ENCODE measurements at regions of chr7 and their contacts with region 1.

Region 1: GRCh38 chr7:7190142-7190541 is 7.8 kb downstream of the C1GALT1 start:
- DNase-seq: no peak
- H3K4me3 Mint-ChIP-seq: no peak overlapping the region
- H3K27ac Mint-ChIP-seq: no peak overlapping the region
- H3K4me1 Mint-ChIP-seq: peaks cover 11% of the 10 kb centered on the region
- H3K27me3 Mint-ChIP-seq: no peaks in the 10 kb centered on the region
- CTCF ChIP-seq: no peak

Region 2: DNA sequence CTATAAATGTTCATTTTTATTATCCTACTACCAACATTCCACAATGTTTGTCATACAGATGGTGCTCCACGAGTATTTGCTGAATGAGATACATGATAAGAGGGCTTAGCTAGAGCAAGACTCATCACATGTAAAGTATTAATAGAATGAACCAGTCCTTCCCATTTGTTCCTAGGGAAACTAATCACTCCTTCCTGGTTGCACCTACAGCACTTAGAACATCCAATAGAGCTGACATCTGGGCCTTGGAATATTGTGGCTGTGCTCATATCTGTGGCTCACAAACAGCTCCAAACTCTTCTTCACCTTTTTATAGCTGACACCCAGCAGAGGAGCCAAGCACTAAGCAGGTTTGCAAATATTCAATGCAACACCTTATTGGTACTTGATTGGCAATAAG is 99.7 kb before region 1 on chr7:
- CTCF ChIA-PET with region 1: no interaction called
- POLR2A ChIA-PET with region 1: no interaction called
- intact Hi-C with region 1: no loop called
- DNase-seq: no peak
- H3K4me3 Mint-ChIP-seq: no peak overlapping the region
- H3K27ac Mint-ChIP-seq: no peak overlapping the region
- H3K4me1 Mint-ChIP-seq: peaks cover 5% of the 10 kb centered on the region
- H3K27me3 Mint-ChIP-seq: no peaks in the 10 kb centered on the region
- CTCF ChIP-seq: no peak

Region 3: GRCh38 chr7:7201578-7202374 is 11.6 kb after region 1 on chr7:
- CTCF ChIA-PET with region 1: interaction called, 3 read pairs
- POLR2A ChIA-PET with region 1: interaction called, 39 read pairs
- intact Hi-C with region 1: no loop called
- DNase-seq: peak; percentile 69
- H3K4me3 Mint-ChIP-seq: peak overlapping the region; percentile 38
- H3K27ac Mint-ChIP-seq: peak overlapping the region; percentile 79
- H3K4me1 Mint-ChIP-seq: peaks cover 29% of the 10 kb centered on the region
- H3K27me3 Mint-ChIP-seq: no peaks in the 10 kb centered on the region
- CTCF ChIP-seq: no peak

Measured in MCF 10A (cell line).